ENCODE measurements at regions of chr14 and their contacts with region 1.

Region 1: DNA sequence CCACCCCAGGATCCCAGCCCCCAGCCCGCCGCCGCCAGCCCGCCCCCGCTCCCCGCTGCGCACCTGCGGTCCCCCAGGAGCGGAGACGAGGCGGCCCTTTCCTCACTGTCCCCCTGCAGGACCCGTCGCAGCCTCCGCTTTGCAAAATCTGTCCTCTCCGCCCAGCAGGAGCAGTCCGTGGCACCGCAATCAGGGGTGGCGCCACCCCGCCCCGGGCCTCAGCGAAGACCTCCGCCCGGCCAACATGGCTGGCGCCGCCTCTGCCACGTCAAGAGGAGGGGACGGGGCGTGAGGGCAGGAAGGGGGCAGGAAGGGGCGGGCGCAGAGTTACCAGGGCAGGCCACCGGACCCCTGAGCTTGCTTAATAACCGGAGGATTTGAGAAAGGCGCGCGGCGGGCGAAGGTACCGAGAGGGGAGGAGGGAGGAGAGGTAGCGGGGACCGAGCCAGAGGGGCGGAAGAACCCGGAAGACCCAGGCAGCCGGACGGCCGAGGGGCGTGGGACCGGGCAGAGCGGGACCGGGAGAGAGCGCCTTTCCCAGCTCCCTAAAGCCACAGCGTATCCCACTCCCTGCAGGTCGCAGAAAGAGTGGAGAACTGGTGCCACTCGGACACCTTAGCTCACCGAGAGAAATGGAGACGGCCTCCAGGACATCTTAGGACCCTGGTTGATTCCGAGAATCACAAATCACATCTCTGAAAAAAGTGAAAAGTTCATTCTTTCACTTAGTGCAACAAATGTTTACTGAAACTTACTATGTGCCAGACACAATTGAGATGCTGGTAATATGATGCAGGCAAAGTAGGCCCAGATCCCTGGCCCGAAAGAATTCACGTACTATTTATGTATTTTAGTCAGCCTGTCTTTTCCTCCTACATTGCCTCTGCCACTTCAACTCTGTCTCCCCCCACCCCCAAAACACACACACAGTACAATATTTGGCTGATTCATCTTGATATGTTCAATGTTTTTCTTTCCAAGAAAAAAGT is at the start of gene SEC23A:
- DNase-seq: peak; percentile 83
- H3K4me3 Mint-ChIP-seq: peak within 1 kb of the TSS; percentile 98
- H3K27ac Mint-ChIP-seq: peak within 1 kb of the TSS; percentile 96
- H3K4me1 Mint-ChIP-seq: peaks cover 57% of the 10 kb centered on the region
- H3K27me3 Mint-ChIP-seq: no peaks in the 10 kb centered on the region
- total RNA-seq, gene SEC23A: 61.2 and 72.0 TPM in 2 replicates

Region 2: DNA sequence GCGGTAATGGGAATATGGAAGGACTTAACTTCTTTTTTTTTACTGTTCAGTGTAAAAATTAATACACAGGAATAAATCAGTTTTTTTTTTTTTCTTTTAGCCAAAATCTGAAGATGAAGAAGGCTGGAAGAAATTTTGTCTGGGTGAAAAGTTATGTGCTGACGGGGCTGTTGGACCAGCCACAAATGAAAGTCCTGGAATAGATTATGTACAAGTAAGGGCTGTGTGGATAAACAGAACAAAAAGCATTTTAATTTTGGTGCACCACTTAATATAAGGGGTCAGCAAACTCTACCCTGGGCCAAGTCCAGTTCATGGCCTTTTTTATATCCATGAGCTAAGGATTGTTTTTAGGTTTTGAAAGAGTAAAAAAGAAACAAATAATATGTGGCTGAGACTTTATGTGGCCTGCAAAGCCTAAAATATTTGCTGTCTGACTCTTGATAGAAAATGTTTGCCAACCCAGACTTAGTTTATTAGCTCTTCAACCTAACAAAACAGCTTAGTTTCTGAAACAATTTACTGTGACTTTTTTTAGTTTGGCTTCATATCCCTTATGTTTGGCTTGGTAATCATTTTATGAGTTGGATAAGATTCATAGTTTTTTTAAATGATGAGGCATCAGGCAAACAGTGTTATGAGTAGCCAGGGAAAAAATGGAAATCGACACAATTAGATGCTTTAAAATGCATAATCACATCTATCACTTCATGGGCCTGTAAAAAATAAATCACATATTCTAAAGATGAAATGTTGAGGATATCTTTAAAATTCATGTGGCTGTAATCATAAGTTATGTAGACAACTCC is 19.3 kb after region 1 on chr14:
- intact Hi-C with region 1: no loop called
- DNase-seq: no peak
- H3K4me3 Mint-ChIP-seq: no peak overlapping the region
- H3K27ac Mint-ChIP-seq: no peak overlapping the region
- H3K4me1 Mint-ChIP-seq: no peaks in the 10 kb centered on the region
- H3K27me3 Mint-ChIP-seq: no peaks in the 10 kb centered on the region

Region 3: GRCh38 chr14:39174560-39175444 is 71.5 kb after region 1 on chr14 and contains the start of gene PNN:
- intact Hi-C with region 1: loop called (anchors 1 kb)
- DNase-seq: peak; percentile 97
- H3K4me3 Mint-ChIP-seq: peak within 1 kb of the TSS; percentile 94
- H3K27ac Mint-ChIP-seq: peak within 1 kb of the TSS; percentile 95
- H3K4me1 Mint-ChIP-seq: peaks cover 29% of the 10 kb centered on the region
- H3K27me3 Mint-ChIP-seq: no peaks in the 10 kb centered on the region
- total RNA-seq, gene PNN: 111 and 116 TPM in 2 replicates

Region 4: DNA sequence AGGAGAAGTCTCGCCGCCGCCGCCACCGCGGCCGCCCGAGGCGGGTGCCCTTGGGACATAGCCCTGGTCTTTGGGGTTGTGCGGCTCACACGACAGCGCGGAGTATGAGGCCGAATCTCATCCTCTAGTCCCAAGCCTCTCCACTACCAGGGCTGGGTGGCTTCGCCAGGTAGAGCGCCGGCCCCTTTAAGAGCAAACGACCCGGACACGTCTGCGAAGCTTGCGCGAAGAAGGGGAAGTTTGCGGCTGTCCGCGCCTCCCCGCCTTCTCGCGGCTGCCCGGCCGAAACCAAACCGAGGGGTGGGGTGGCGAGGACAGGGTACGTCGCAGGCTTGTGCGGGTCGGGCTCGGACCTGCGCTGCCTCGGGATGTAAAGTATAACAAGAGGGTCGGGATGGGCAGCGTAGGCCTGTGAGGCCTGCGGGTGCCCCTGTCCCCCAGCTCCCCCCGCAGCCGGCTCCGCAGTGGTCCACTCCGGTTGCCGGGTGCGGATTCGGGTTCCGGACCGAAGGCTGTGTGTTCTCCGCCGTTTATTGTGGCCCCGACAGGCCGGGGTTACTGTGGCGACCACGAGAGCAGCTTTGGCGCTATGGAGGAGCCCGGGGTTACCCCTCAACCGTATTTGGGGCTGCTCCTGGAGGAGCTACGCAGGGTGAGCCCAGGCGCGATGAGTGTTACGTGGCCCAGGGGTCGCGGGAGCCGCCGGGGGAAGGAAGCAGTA is 163.8 kb after region 1 on chr14:
- intact Hi-C with region 1: loop called (anchors 1 kb)
- DNase-seq: peak; percentile 76
- H3K4me3 Mint-ChIP-seq: peak overlapping the region; percentile 80
- H3K27ac Mint-ChIP-seq: peak overlapping the region; percentile 79
- H3K4me1 Mint-ChIP-seq: peaks cover 52% of the 10 kb centered on the region
- H3K27me3 Mint-ChIP-seq: no peaks in the 10 kb centered on the region

Region 5: DNA sequence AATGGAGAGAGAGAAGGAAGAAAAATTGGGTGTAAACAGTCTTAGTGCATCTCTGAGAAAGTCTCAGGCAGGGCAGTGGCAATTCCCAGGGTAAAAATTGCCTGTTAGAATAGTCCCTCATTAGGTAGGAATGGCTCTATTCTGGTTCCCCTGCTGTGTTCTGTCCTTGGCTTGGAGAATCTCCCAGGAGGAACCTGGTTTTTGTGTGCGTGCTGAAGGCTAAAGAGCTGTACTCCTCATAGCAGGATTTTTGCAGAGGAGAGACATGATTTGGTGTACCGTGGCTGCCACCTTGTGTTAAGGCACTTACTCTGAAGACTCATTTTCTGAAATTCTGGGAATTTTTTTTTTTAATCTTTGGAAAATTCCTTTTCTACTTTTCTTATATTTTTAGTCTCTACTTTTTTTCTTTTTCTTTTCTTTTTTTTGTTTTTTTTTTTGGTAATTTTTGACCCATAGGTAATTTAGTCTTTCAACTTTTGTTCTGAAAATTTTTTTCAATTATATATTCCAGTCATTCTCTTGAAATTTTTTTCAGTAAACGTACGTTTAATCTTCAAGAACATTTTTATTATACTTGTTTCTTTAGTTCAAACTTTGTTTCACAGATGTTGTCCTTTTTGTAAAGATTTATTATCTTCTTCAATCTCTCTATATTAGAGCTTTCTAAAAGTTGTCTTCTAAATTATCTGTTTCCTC is 265.1 kb after region 1 on chr14:
- intact Hi-C with region 1: loop called (anchors 1 kb)
- DNase-seq: no peak
- H3K4me3 Mint-ChIP-seq: no peak overlapping the region
- H3K27ac Mint-ChIP-seq: no peak overlapping the region
- H3K4me1 Mint-ChIP-seq: no peaks in the 10 kb centered on the region
- H3K27me3 Mint-ChIP-seq: no peaks in the 10 kb centered on the region

Region 6: DNA sequence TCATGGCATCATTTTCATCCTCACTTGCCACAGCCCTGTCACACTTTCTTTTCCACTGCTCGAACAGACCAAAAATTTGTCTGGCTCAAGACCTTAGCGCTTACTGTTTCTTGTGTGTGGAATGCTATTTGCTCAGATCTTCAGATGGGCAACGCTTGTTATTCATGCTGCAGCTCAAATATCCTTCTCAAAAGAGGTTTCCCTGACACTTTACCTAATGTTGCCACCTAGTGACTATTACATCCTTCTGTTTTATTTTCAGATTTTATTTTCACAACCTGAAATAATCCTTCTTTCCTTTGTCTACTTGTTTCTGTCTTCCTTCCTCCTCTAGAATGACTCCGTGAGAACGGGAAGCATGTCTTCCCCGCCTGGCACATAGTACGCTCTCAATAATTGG is 323.3 kb after region 1 on chr14:
- intact Hi-C with region 1: loop called (anchors 1 kb)
- DNase-seq: no peak
- H3K4me3 Mint-ChIP-seq: no peak overlapping the region
- H3K27ac Mint-ChIP-seq: no peak overlapping the region
- H3K4me1 Mint-ChIP-seq: peaks cover 58% of the 10 kb centered on the region
- H3K27me3 Mint-ChIP-seq: no peaks in the 10 kb centered on the region

Measured in activated T-helper 1 cell treated with anti-CD3 and anti-CD28 coated beads, Interleukin-12 subunit alpha, Interleukin-12 subunit beta, Interleukin-2, Interleukin-4 antibody, amounts not matched to agents 30 ng/mL and 10 ng/mL and 1 ng/mL, durations not matched to agents 14 hours and 24 hours and 36 hours (primary cell).